K562 (cell line): ENCODE measurements at regions of chr1 and their contacts with region 1.

Region 1: DNA sequence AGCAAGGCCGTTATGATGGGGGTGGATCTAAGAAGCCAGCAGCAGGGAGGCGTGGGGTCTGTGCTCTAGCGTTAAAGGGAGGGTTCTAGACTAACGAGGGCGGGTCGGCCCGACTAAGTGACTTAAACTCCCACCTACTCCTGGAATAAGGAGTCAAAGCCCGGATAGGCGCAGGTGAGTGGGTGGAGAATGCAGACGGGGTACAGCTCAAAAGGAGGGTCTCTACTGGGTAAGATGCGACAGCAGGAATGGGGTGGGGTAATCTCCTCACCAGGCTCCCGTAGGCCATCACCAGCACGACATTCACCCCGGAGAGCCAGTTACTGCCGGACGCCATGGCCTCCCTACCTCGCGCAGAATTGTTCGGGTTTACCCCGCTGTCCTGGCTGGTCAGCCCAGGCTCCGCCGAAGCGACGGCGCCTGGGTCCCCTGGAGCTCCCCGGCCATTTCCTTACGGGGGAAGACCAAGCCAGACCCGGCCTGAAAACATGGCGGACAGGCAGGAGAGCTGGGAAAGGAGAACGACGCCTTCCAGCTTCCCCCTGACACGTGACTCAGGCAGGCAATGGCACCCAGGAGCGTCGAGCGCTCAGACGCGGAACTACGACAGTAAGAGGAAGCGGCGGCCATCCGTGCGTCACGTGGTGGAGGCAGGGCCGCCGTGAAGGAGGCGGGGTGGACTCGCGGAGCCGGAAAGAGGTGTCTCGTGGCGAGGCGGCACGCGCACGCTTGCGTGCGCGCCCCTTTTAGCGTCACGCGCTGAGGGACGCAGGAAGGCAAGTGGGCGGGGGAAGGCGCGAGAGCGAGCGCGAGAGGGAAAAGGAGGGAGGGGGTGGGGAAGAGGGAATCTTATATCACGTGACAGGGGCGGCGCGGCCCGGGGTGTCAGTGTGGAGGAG is at the start of gene UBAP2L:
- DNase-seq: peak; percentile 84 to 100 (median 90)
- ATAC-seq: peak; percentile 92
- H3K4me3 ChIP-seq: peak within 1 kb of the TSS; percentile 76
- H3K27ac ChIP-seq: peak within 1 kb of the TSS; percentile 99
- H3K4me1 ChIP-seq: peaks cover 3 to 20% of the 10 kb centered on the region in 2 experiments; a peak in 3 of 5 replicates
- H3K27me3 ChIP-seq: no peaks in the 10 kb centered on the region
- CTCF ChIP-seq: no peak; a peak in 1 of 6 replicates
- EP300 ChIP-seq: no peak
- POLR2A ChIP-seq: peak; percentile 94
- RAD21 ChIP-seq: no peak
- polyA plus RNA-seq, gene UBAP2L: 75.0 to 92.3 TPM

Region 2: DNA sequence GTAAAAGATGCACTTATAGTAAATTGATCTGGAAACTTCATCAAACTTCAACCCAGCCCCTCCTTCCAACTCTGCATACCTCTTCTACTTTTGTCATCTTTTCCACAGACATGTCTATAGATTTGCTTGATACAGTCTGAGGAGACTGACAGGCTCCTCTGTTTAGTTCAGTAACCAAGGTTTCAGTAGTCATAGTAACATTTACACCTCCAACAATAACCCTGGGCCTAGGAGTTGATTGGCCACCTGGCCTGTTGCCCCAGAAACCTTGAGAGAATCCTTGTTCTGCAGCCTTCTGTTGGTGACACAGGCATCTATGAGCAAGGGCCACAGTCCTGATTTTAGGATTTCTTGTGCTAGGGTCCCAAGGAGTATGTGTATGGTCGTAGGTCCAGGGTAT is 14.1 kb before region 1 on chr1 and contains the start of gene CFAP141:
- CTCF ChIA-PET with region 1: no interaction called
- POLR2A ChIA-PET with region 1: interaction called, 11 read pairs
- in situ Hi-C with region 1: no loop called
- intact Hi-C with region 1: no loop called
- DNase-seq: peak in 2 of 4 experiments; percentile 22 to 42
- ATAC-seq: peak; percentile 73
- H3K4me3 ChIP-seq: no peak within 1 kb of the TSS
- H3K27ac ChIP-seq: no peak within 1 kb of the TSS
- H3K4me1 ChIP-seq: no peaks in the 10 kb centered on the region
- H3K27me3 ChIP-seq: no peaks in the 10 kb centered on the region
- CTCF ChIP-seq: no peak
- EP300 ChIP-seq: no peak
- POLR2A ChIP-seq: no peak
- RAD21 ChIP-seq: no peak
- polyA plus RNA-seq, gene CFAP141: not detected